H1 (cell line): ENCODE measurements at regions of chr20 and their contacts with region 1.

Region 1: GRCh38 chr20:2005831-2006426 is 12.1 kb upstream of the PDYN start:
- DNase-seq: peak; percentile 36 to 94
- H3K4me3 ChIP-seq: no peak overlapping the region
- H3K27ac ChIP-seq: no peak overlapping the region
- H3K4me1 ChIP-seq: peaks cover 0 to 14% (median 7%) of the 10 kb centered on the region in 4 experiments; a peak in 3 of 7 replicates
- H3K27me3 ChIP-seq: peaks cover 0 to 8% (median under 1%) of the 10 kb centered on the region in 4 experiments; a peak in 3 of 7 replicates
- CTCF ChIP-seq: no peak
- EP300 ChIP-seq: no peak
- POLR2A ChIP-seq: no peak
- RAD21 ChIP-seq: peak; percentile 8 to 25; a peak in 1 of 4 replicates

Region 2: GRCh38 chr20:1741309-1742048 is 264.4 kb before region 1 on chr20:
- CTCF ChIA-PET with region 1: no interaction called
- POLR2A ChIA-PET with region 1: no interaction called
- DNase-seq: no peak
- H3K4me3 ChIP-seq: no peak overlapping the region
- H3K27ac ChIP-seq: no peak overlapping the region
- H3K4me1 ChIP-seq: peaks cover 0 to 7% (median 0%) of the 10 kb centered on the region in 4 experiments; a peak in 3 of 7 replicates
- H3K27me3 ChIP-seq: no peaks in the 10 kb centered on the region
- CTCF ChIP-seq: no peak
- EP300 ChIP-seq: no peak
- POLR2A ChIP-seq: no peak
- RAD21 ChIP-seq: no peak

Region 3: DNA sequence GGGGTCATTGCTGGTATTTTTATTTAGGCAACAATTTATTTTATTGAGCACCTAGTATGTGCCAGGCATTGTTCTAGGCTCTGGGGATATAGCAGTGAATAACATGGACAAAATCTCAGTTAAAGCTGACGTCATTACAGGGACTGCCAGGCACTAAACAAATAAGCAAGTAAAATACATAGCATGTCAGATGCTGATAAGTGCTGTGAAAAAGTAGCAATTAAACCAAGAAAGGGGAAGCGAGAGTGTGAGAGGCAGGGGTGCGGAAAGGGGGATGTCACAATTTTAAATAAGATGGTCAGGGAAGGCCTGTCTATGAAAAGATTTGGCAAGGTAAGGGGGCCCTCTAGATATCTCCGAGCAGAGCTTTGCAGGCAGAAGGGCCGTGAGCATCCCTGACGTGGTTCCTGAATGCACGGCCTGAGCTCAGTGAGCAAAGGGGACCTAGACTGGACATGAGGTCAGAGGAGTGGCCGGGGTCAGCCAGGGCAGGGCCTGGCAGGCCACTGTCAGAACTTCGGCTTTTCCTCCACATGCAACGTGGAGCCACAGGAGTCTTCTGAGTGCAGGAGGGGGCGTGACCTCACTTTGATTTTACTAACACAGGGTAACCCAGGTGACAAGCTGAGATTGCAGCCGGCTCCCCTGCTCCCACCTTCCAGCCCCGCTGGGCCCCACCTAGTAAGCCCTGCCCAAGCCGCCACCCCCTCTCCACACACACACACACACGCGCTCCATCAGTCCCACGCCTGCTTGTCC is 135.0 kb before region 1 on chr20:
- CTCF ChIA-PET with region 1: no interaction called
- POLR2A ChIA-PET with region 1: no interaction called
- DNase-seq: no peak
- H3K4me3 ChIP-seq: no peak overlapping the region
- H3K27ac ChIP-seq: no peak overlapping the region
- H3K4me1 ChIP-seq: peaks cover 0 to 3% (median 0%) of the 10 kb centered on the region in 4 experiments; a peak in 3 of 7 replicates
- H3K27me3 ChIP-seq: no peaks in the 10 kb centered on the region
- CTCF ChIP-seq: no peak
- EP300 ChIP-seq: no peak
- POLR2A ChIP-seq: no peak
- RAD21 ChIP-seq: no peak

Region 4: GRCh38 chr20:1965520-1966351 is 40.2 kb before region 1 on chr20:
- CTCF ChIA-PET with region 1: interaction called, 30 read pairs
- POLR2A ChIA-PET with region 1: no interaction called
- DNase-seq: peak; percentile 73 to 96
- H3K4me3 ChIP-seq: peak overlapping the region in 1 of 4 experiments; percentile 50; a peak in 4 of 8 replicates
- H3K27ac ChIP-seq: no peak overlapping the region
- H3K4me1 ChIP-seq: peaks cover 4 to 17% (median 11%) of the 10 kb centered on the region in 4 experiments; a peak in 6 of 7 replicates
- H3K27me3 ChIP-seq: peaks cover 0 to 4% (median 0%) of the 10 kb centered on the region in 4 experiments; a peak in 2 of 7 replicates
- CTCF ChIP-seq: peak; percentile 85 to 93 (median 91)
- EP300 ChIP-seq: peak in 1 of 2 experiments; percentile 20; a peak in 1 of 3 replicates
- POLR2A ChIP-seq: no peak
- RAD21 ChIP-seq: peak; percentile 93 to 95

Region 5: GRCh38 chr20:1993986-1994385 is 11.9 kb before region 1 on chr20 and contains the start of gene PDYN:
- CTCF ChIA-PET with region 1: interaction called, 24 read pairs
- POLR2A ChIA-PET with region 1: no interaction called
- DNase-seq: no peak
- H3K4me3 ChIP-seq: no peak within 1 kb of the TSS
- H3K27ac ChIP-seq: no peak within 1 kb of the TSS
- H3K4me1 ChIP-seq: peaks cover 2 to 18% (median 8%) of the 10 kb centered on the region in 4 experiments; a peak in 6 of 7 replicates
- H3K27me3 ChIP-seq: peaks cover 0 to 4% (median 1%) of the 10 kb centered on the region in 4 experiments; a peak in 2 of 7 replicates
- CTCF ChIP-seq: no peak
- EP300 ChIP-seq: no peak
- POLR2A ChIP-seq: no peak
- RAD21 ChIP-seq: no peak
- total RNA-seq, gene PDYN: 0.54 and 0.63 TPM in 2 replicates

Region 6: GRCh38 chr20:2032155-2032554 is 26.2 kb after region 1 on chr20:
- CTCF ChIA-PET with region 1: interaction called, 88 read pairs
- POLR2A ChIA-PET with region 1: no interaction called
- DNase-seq: no peak
- H3K4me3 ChIP-seq: no peak overlapping the region
- H3K27ac ChIP-seq: no peak overlapping the region
- H3K4me1 ChIP-seq: 0 out of 7 replicates have a peak, but pooled peaks cover 0 to 3% (median 1%) of the 10 kb centered on the region in 4 experiments
- H3K27me3 ChIP-seq: no peaks in the 10 kb centered on the region
- CTCF ChIP-seq: no peak
- EP300 ChIP-seq: no peak
- POLR2A ChIP-seq: no peak
- RAD21 ChIP-seq: no peak

Region 7: DNA sequence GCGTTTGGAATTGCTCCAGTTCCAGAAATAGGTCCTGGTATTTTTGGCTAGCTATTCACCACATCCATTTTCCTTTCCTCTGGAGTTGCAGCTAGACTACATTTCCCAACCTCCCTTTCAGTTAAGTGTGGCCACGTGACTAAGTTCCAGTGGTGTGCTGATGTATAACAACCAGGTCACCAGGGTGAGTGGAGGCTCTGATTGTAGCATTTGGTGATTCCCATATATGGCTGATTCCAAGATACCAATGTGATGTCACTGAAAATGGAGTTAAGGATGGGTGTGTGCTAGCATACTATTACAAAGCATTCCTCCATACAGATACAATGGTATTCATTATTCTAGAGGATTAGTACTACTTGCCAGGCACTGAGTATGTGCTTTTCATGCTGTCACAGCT is 46.0 kb after region 1 on chr20:
- CTCF ChIA-PET with region 1: interaction called, 12 read pairs
- POLR2A ChIA-PET with region 1: no interaction called
- DNase-seq: no peak
- H3K4me3 ChIP-seq: no peak overlapping the region
- H3K27ac ChIP-seq: no peak overlapping the region
- H3K4me1 ChIP-seq: no peaks in the 10 kb centered on the region; a peak in 1 of 7 replicates
- H3K27me3 ChIP-seq: no peaks in the 10 kb centered on the region
- CTCF ChIP-seq: no peak
- EP300 ChIP-seq: no peak
- POLR2A ChIP-seq: no peak
- RAD21 ChIP-seq: no peak

Region 8: GRCh38 chr20:2172305-2173175 is 166.6 kb after region 1 on chr20:
- CTCF ChIA-PET with region 1: interaction called, 33 read pairs
- POLR2A ChIA-PET with region 1: no interaction called
- DNase-seq: peak in 1 of 2 experiments; percentile 87
- H3K4me3 ChIP-seq: peak overlapping the region in 1 of 4 experiments; percentile 48; a peak in 1 of 8 replicates
- H3K27ac ChIP-seq: no peak overlapping the region
- H3K4me1 ChIP-seq: no peaks in the 10 kb centered on the region
- H3K27me3 ChIP-seq: no peaks in the 10 kb centered on the region; a peak in 1 of 7 replicates
- CTCF ChIP-seq: peak; percentile 80 to 93 (median 84)
- EP300 ChIP-seq: no peak
- POLR2A ChIP-seq: no peak
- RAD21 ChIP-seq: peak; percentile 95 to 97